HEK293 (cell line): ENCODE measurements at regions of chr1 and their contacts with region 1.

Region 1: DNA sequence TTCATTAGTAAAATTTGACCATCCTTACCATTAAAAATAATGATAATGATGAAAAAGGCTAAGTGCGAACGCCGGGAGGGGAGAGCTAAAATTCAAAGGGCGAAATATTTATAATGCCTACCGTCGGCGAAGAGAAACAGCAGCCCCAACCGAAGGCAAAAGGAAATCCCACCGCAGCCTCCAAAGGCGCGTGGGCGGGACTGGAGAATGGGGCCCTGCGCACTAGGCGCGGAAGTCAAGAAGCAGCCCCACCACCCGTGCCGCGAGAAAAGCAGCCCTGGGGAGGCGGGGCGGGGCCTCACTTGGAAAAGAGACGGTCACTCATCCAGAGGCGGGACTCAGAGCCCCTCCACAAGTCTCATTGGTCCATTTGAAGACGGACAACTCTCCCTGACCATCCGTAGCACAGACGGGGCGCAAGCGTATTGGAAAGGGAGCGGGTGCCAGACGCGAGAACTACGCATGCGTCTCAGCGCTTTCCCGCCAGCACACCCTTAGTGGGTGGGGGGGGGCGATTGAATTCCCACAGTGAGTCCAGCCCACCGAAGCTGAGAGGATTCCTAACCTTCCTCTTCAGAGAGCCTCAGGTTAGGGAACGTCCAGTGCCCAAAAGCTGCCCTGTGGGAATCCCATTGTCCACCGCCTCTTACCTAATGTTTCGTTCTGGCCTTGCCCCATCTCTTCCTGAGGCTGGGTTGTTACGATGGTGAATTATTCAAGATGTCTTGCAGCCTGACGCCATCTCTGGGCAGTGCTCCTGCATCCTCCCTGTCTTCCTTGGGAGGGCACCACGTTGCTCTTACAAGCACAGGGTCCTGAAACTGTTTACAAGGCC is 19.0 kb downstream of the MTX1 start:
- H3K4me3 ChIP-seq: peak overlapping the region; percentile 53
- H3K27ac ChIP-seq: peak overlapping the region; percentile 76
- H3K4me1 ChIP-seq: peaks cover 3% of the 10 kb centered on the region
- CTCF ChIP-seq: no peak

Region 2: DNA sequence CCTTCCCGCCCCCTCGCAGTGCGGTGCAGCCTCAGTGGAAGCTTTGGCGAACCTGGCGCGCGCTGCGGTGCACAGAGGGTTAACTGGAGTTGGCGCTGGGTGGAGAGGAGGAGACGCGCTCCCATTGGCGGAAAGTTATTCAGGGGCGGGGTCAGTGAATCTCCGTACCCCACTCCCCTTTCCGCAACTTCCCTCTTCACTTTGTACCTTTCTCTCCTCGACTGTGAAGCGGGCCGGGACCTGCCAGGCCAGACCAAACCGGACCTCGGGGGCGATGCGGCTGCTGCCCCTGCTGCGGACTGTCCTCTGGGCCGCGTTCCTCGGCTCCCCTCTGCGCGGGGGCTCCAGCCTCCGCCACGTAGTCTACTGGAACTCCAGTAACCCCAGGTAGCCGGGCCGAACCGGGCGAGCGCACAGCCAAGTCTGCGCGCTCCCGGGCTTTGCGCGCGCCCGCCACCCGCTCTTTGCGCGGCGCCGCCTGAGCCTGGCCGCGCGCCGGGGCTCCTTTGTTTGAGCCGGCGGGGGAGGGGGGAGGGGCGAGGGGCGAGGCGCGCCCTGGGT is 163.8 kb before region 1 on chr1 and contains the start of gene EFNA4:
- CTCF ChIA-PET with region 1: no interaction called
- POLR2A ChIA-PET with region 1: no interaction called
- H3K4me3 ChIP-seq: peak within 1 kb of the TSS; percentile 88
- H3K27ac ChIP-seq: peak within 1 kb of the TSS; percentile 64; the same call in 1 of the 2 replicates
- H3K4me1 ChIP-seq: no peaks in the 10 kb centered on the region; the same call in none of the 2 replicates
- CTCF ChIP-seq: no peak

Region 3: GRCh38 chr1:155193275-155193990 is 34.0 kb before region 1 on chr1:
- CTCF ChIA-PET with region 1: interaction called, 16 read pairs
- POLR2A ChIA-PET with region 1: interaction called, 5 read pairs
- H3K4me3 ChIP-seq: peak overlapping the region; percentile 40
- H3K27ac ChIP-seq: peak overlapping the region; percentile 42; the same call in 1 of the 2 replicates
- H3K4me1 ChIP-seq: peaks cover 3% of the 10 kb centered on the region; the same call in 1 of the 2 replicates
- CTCF ChIP-seq: peak; percentile 98